ENCODE measurements at regions of chr2 and their contacts with region 1.

Region 1: DNA sequence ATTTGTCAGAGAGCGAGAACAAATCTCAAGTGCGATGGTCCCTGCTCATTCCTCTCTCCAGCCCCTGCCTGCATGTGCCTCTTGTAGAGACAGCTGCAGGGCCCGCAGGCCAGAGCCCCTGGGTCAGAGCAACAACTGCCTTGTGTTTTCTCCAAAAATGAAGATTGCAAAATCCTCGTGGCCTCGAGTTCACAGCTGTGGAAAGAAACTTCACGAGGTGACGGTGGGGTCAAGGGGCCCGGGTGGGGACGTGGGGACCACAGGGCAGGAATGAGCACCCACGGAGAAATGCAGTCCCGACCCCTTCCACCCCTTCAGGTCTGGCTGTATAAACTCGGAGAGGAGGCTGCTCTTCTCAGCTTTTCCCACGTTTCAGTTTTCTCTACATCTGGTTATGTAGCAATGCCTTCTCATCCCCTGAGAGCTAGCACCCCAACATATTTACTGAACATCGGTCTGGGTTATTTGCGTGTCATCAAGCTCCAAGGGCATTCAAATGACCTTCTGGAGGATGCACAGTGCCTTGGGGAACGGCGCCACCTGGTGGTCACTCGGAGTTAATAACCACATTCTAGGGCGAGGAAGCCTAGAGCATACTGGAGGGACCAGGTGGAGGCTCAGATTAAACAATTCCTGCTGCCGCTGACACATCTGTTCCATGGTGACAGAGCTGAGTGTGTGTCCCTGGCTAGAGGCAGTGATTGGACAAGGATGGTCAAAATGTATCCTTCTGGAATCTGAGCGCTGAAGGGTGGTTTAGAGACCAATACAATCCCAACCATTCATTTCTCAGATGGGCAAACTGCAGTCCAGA is 91.4 kb upstream of the CYRIA start:
- DNase-seq: peak; percentile 71
- ATAC-seq: peak; percentile 85
- H3K4me3 Mint-ChIP-seq: no peak overlapping the region
- H3K27ac Mint-ChIP-seq: no peak overlapping the region
- H3K4me1 Mint-ChIP-seq: no peaks in the 10 kb centered on the region
- H3K27me3 Mint-ChIP-seq: no peaks in the 10 kb centered on the region
- CTCF ChIP-seq: peak; percentile 88

Region 2: GRCh38 chr2:16262526-16263178 is 494.4 kb before region 1 on chr2:
- CTCF ChIA-PET with region 1: no interaction called
- POLR2A ChIA-PET with region 1: no interaction called
- intact Hi-C with region 1: no loop called
- DNase-seq: no peak
- ATAC-seq: no peak
- H3K4me3 Mint-ChIP-seq: no peak overlapping the region
- H3K27ac Mint-ChIP-seq: no peak overlapping the region
- H3K4me1 Mint-ChIP-seq: peaks cover 3% of the 10 kb centered on the region
- H3K27me3 Mint-ChIP-seq: peaks cover 6% of the 10 kb centered on the region
- CTCF ChIP-seq: no peak

Region 3: GRCh38 chr2:16553226-16553625 is 203.8 kb before region 1 on chr2:
- CTCF ChIA-PET with region 1: interaction called, 11 read pairs
- POLR2A ChIA-PET with region 1: no interaction called
- intact Hi-C with region 1: loop called (anchors 5 kb)
- DNase-seq: peak; percentile 35
- ATAC-seq: no peak
- H3K4me3 Mint-ChIP-seq: no peak overlapping the region
- H3K27ac Mint-ChIP-seq: no peak overlapping the region
- H3K4me1 Mint-ChIP-seq: no peaks in the 10 kb centered on the region
- H3K27me3 Mint-ChIP-seq: peaks cover 3% of the 10 kb centered on the region
- CTCF ChIP-seq: peak; percentile 68

Region 4: GRCh38 chr2:16584824-16585540 is 172.1 kb before region 1 on chr2:
- CTCF ChIA-PET with region 1: no interaction called
- POLR2A ChIA-PET with region 1: no interaction called
- intact Hi-C with region 1: no loop called
- DNase-seq: no peak
- ATAC-seq: no peak
- H3K4me3 Mint-ChIP-seq: no peak overlapping the region
- H3K27ac Mint-ChIP-seq: no peak overlapping the region
- H3K4me1 Mint-ChIP-seq: no peaks in the 10 kb centered on the region
- H3K27me3 Mint-ChIP-seq: peaks cover 1% of the 10 kb centered on the region
- CTCF ChIP-seq: no peak

Region 5: GRCh38 chr2:16617282-16618261 is 139.5 kb before region 1 on chr2:
- CTCF ChIA-PET with region 1: interaction called, 41 read pairs
- POLR2A ChIA-PET with region 1: no interaction called
- intact Hi-C with region 1: loop called (anchors 2 kb)
- DNase-seq: no peak
- ATAC-seq: no peak
- H3K4me3 Mint-ChIP-seq: no peak overlapping the region
- H3K27ac Mint-ChIP-seq: no peak overlapping the region
- H3K4me1 Mint-ChIP-seq: no peaks in the 10 kb centered on the region
- H3K27me3 Mint-ChIP-seq: peaks cover 3% of the 10 kb centered on the region
- CTCF ChIP-seq: peak; percentile 20

Region 6: DNA sequence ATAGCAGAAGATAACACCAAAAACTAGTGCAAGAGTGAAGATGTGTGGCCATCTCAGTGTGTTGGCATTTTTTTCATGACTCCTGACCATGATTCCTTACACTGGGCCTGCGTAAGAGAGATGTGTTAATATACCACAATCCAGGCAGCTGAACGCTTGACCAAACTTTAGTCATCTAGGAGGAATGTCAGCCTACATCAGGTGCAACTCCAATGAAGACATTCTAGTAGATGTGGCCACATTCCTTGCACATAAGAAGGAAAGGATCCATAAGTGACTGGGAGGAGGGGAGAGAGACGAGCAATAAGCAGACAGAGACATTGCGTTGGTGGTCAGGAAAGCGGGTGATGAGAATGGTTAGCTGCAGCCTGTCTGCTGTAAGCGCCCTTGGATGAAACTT is 134.0 kb before region 1 on chr2:
- CTCF ChIA-PET with region 1: interaction called, 13 read pairs
- POLR2A ChIA-PET with region 1: no interaction called
- intact Hi-C with region 1: loop called (anchors 2 kb)
- DNase-seq: no peak
- ATAC-seq: no peak
- H3K4me3 Mint-ChIP-seq: no peak overlapping the region
- H3K27ac Mint-ChIP-seq: no peak overlapping the region
- H3K4me1 Mint-ChIP-seq: peaks cover 12% of the 10 kb centered on the region
- H3K27me3 Mint-ChIP-seq: peaks cover 1% of the 10 kb centered on the region
- CTCF ChIP-seq: no peak

Region 7: GRCh38 chr2:16722677-16723076 is 34.4 kb before region 1 on chr2:
- CTCF ChIA-PET with region 1: no interaction called
- POLR2A ChIA-PET with region 1: no interaction called
- intact Hi-C with region 1: no loop called
- DNase-seq: no peak
- ATAC-seq: no peak
- H3K4me3 Mint-ChIP-seq: no peak overlapping the region
- H3K27ac Mint-ChIP-seq: no peak overlapping the region
- H3K4me1 Mint-ChIP-seq: peaks cover 3% of the 10 kb centered on the region
- H3K27me3 Mint-ChIP-seq: peaks cover 11% of the 10 kb centered on the region
- CTCF ChIP-seq: no peak

Region 8: GRCh38 chr2:16767789-16768476 is 10.9 kb after region 1 on chr2:
- CTCF ChIA-PET with region 1: interaction called, 23 read pairs
- POLR2A ChIA-PET with region 1: no interaction called
- intact Hi-C with region 1: no loop called
- DNase-seq: no peak
- ATAC-seq: no peak
- H3K4me3 Mint-ChIP-seq: no peak overlapping the region
- H3K27ac Mint-ChIP-seq: no peak overlapping the region
- H3K4me1 Mint-ChIP-seq: no peaks in the 10 kb centered on the region
- H3K27me3 Mint-ChIP-seq: peaks cover 14% of the 10 kb centered on the region
- CTCF ChIP-seq: no peak